Panc1 (cell line): ENCODE measurements at regions of chr3 and their contacts with region 1.

Region 1: GRCh38 chr3:17412950-17413530 is 329.4 kb downstream of the TBC1D5 start:
- DNase-seq: peak; percentile 17
- ATAC-seq: no peak
- H3K4me3 ChIP-seq: no peak overlapping the region
- H3K27ac ChIP-seq: no peak overlapping the region
- H3K4me1 ChIP-seq: no peaks in the 10 kb centered on the region
- H3K27me3 ChIP-seq: no peaks in the 10 kb centered on the region
- CTCF ChIP-seq: peak; percentile 72

Region 2: GRCh38 chr3:17258823-17259436 is 154.1 kb before region 1 on chr3:
- CTCF ChIA-PET with region 1: no interaction called
- POLR2A ChIA-PET with region 1: no interaction called
- in situ Hi-C with region 1: no loop called
- intact Hi-C with region 1: loop called (anchors 2 kb)
- DNase-seq: peak; percentile 12
- ATAC-seq: no peak
- H3K4me3 ChIP-seq: no peak overlapping the region
- H3K27ac ChIP-seq: no peak overlapping the region
- H3K4me1 ChIP-seq: no peaks in the 10 kb centered on the region
- H3K27me3 ChIP-seq: no peaks in the 10 kb centered on the region
- CTCF ChIP-seq: peak; percentile 67; the same call in 1 of the 2 replicates

Region 3: GRCh38 chr3:17307482-17307881 is 105.6 kb before region 1 on chr3:
- CTCF ChIA-PET with region 1: no interaction called
- POLR2A ChIA-PET with region 1: no interaction called
- in situ Hi-C with region 1: no loop called
- intact Hi-C with region 1: loop called (anchors 5 kb)
- DNase-seq: no peak
- ATAC-seq: no peak
- H3K4me3 ChIP-seq: no peak overlapping the region
- H3K27ac ChIP-seq: no peak overlapping the region
- H3K4me1 ChIP-seq: no peaks in the 10 kb centered on the region
- H3K27me3 ChIP-seq: no peaks in the 10 kb centered on the region
- CTCF ChIP-seq: peak; percentile 29; the same call in 1 of the 2 replicates